ENCODE measurements at regions of chr2 and their contacts with region 1.

Region 1: GRCh38 chr2:64144057-64145013 is at the start of gene PELI1:
- DNase-seq: peak; percentile 99
- H3K4me3 ChIP-seq: peak within 1 kb of the TSS; percentile 97
- H3K27ac ChIP-seq: peak within 1 kb of the TSS; percentile 80
- H3K4me1 ChIP-seq: peaks cover 41% of the 10 kb centered on the region
- CTCF ChIP-seq: peak; percentile 68; the same call in 1 of the 2 replicates
- total RNA-seq, gene PELI1: 108 and 110 TPM in 2 replicates

Region 2: GRCh38 chr2:62826141-62826540 is 1318.2 kb before region 1 on chr2:
- CTCF ChIA-PET with region 1: no interaction called
- POLR2A ChIA-PET with region 1: no interaction called
- intact Hi-C with region 1: no loop called
- DNase-seq: no peak
- H3K4me3 ChIP-seq: no peak overlapping the region
- H3K27ac ChIP-seq: no peak overlapping the region
- H3K4me1 ChIP-seq: no peaks in the 10 kb centered on the region
- CTCF ChIP-seq: no peak

Region 3: GRCh38 chr2:64052468-64053241 is 91.7 kb before region 1 on chr2:
- CTCF ChIA-PET with region 1: no interaction called
- POLR2A ChIA-PET with region 1: interaction called, 4 read pairs
- intact Hi-C with region 1: loop called (anchors 1 kb)
- DNase-seq: peak; percentile 83
- H3K4me3 ChIP-seq: peak overlapping the region; percentile 11
- H3K27ac ChIP-seq: peak overlapping the region; percentile 96
- H3K4me1 ChIP-seq: peaks cover 84% of the 10 kb centered on the region
- CTCF ChIP-seq: no peak

Region 4: DNA sequence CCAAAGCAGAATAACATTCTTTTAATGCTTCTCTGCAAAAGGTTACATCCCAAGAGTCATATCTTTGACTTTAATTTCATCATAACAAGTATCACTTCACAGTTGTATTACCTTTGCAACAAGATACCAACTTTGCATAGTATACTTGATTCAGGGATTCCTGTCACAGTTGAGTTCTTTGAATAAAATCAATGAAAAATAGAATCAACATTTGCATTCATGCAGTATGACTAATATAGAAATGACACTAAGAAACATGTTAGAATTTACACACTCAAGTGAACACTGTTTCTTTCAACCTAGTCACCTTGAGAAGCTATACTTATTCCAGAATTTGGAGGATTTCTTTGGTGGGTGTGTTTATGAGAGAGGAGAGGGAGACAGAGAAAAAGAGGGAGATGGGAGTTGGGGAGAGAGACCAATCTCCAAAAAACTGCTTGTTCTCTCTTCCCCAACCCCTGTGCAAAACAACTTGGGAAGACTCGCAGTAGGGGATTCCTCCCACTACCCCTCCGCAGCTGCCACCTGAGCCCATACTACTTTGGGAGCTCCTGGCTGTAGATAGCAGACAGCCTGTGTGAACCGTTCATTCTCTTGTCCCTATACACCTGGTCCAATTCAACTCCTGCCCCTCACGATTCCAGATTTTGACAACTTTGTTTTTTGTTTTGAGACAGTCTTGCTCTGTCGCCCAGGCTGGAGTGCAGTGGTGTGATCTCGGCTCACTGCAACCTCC is 57.8 kb before region 1 on chr2:
- CTCF ChIA-PET with region 1: no interaction called
- POLR2A ChIA-PET with region 1: interaction called, 36 read pairs
- intact Hi-C with region 1: loop called (anchors 1 kb)
- DNase-seq: peak; percentile 75
- H3K4me3 ChIP-seq: peak overlapping the region; percentile 55
- H3K27ac ChIP-seq: peak overlapping the region; percentile 99
- H3K4me1 ChIP-seq: peaks cover 95% of the 10 kb centered on the region
- CTCF ChIP-seq: no peak

Region 5: DNA sequence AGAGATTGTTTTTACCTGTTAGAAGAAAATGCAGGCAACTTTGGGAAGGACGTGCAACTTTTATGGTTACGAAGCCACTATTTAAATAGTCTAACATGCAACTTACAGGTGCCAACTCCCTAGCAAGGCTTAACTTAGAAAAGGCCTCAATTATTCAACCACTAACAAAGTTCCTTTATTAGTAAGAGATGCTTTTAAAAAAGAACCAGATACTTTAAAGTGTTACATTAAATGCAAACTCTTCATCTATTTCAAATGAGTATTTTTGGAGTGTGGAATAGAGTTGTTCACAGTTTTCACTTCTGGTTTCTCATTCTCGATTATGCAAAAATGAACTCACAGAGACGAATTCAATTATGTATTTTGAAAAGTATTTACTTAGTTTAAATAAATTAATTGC is 51.8 kb before region 1 on chr2:
- CTCF ChIA-PET with region 1: no interaction called
- POLR2A ChIA-PET with region 1: interaction called, 36 read pairs
- intact Hi-C with region 1: loop called (anchors 1 kb)
- DNase-seq: peak; percentile 83
- H3K4me3 ChIP-seq: peak overlapping the region; percentile 54
- H3K27ac ChIP-seq: peak overlapping the region; percentile 99
- H3K4me1 ChIP-seq: peaks cover 87% of the 10 kb centered on the region
- CTCF ChIP-seq: no peak

Region 6: GRCh38 chr2:64119369-64119768 is 25.0 kb before region 1 on chr2:
- CTCF ChIA-PET with region 1: no interaction called
- POLR2A ChIA-PET with region 1: interaction called, 16 read pairs
- intact Hi-C with region 1: no loop called
- DNase-seq: no peak
- H3K4me3 ChIP-seq: no peak overlapping the region
- H3K27ac ChIP-seq: no peak overlapping the region
- H3K4me1 ChIP-seq: peaks cover 93% of the 10 kb centered on the region
- CTCF ChIP-seq: no peak

Region 7: GRCh38 chr2:64133828-64134227 is 10.5 kb before region 1 on chr2:
- CTCF ChIA-PET with region 1: no interaction called
- POLR2A ChIA-PET with region 1: interaction called, 12 read pairs
- intact Hi-C with region 1: no loop called
- DNase-seq: no peak
- H3K4me3 ChIP-seq: no peak overlapping the region
- H3K27ac ChIP-seq: peak overlapping the region; percentile 21
- H3K4me1 ChIP-seq: peaks cover 93% of the 10 kb centered on the region
- CTCF ChIP-seq: no peak

Region 8: GRCh38 chr2:64214281-64215115 is 70.2 kb after region 1 on chr2:
- CTCF ChIA-PET with region 1: no interaction called
- POLR2A ChIA-PET with region 1: interaction called, 3 read pairs
- intact Hi-C with region 1: loop called (anchors 2 kb)
- DNase-seq: peak; percentile 94
- H3K4me3 ChIP-seq: peak overlapping the region; percentile 59
- H3K27ac ChIP-seq: peak overlapping the region; percentile 96
- H3K4me1 ChIP-seq: peaks cover 64% of the 10 kb centered on the region
- CTCF ChIP-seq: no peak

Region 9: GRCh38 chr2:64356906-64357305 is 212.6 kb after region 1 on chr2:
- CTCF ChIA-PET with region 1: no interaction called
- POLR2A ChIA-PET with region 1: no interaction called
- intact Hi-C with region 1: no loop called
- DNase-seq: no peak
- H3K4me3 ChIP-seq: no peak overlapping the region
- H3K27ac ChIP-seq: no peak overlapping the region
- H3K4me1 ChIP-seq: peaks cover 30% of the 10 kb centered on the region
- CTCF ChIP-seq: no peak

Measured in OCI-LY7 (cell line).